Right ventricle myocardium superior (tissue), 1 donor: ENCODE measurements at regions of chr3 and their contacts with region 1.

Region 1: GRCh38 chr3:190224863-190225692 is 97.2 kb downstream of the CLDN1 start:
- DNase-seq: no peak
- ATAC-seq: no peak

Region 2: DNA sequence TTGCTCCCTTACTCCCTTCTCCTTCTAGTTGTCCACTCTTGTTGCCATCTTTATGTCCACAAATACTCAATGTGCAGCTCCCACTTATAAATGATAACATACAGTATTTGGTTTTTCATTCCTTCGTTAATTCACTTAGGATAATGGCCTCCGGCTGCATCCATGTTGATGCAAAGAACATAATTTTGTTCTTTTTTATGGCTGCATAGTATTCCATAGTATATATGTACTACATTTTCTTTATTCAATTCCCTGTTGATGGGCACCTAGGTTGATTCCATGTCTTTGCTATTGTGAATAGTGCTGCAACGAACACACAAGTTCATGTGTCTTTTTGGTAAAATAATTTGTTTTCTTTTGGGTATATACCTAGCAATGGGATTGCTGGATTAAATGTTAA is 83.0 kb before region 1 on chr3:
- intact Hi-C with region 1: no loop called
- DNase-seq: no peak
- ATAC-seq: no peak

Region 3: GRCh38 chr3:190321789-190322603 is 96.9 kb after region 1 on chr3 and contains the start of gene CLDN1:
- intact Hi-C with region 1: loop called (anchors 10 kb)
- DNase-seq: peak; percentile 87
- ATAC-seq: peak; percentile 98
- total RNA-seq, gene CLDN1: not detected

Region 4: DNA sequence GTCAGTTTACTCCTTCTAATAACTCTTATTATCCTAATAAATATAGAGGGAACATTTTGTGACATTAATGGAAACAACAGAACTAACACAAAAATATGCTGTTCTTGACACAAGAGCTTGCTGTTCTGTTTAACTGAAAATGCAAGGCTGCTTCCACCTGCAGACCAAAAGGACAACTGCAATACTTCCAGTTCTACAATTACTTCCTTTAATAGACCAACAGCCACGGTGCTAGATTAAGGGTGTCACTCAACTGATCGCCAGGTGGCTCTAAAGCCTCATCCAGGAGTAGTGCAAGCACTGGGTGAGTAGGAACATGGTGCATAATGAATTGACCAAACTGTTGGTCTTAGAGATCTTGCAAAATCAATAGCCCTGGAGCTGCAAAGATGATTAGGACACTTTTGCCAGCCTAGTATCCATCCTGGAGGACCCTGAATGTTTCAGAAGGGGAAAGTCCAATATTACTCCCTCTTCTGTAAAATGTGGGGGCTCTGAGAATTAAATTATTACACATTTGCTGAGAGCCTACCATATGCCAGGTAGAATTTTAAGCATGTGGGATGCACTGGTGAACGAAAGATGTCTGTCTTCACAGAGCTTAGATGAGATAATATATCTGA is 159.3 kb after region 1 on chr3:
- intact Hi-C with region 1: no loop called
- DNase-seq: no peak
- ATAC-seq: peak; percentile 96